Endothelial cell of umbilical vein (primary cell): ENCODE measurements at regions of chr2 and their contacts with region 1.

Region 1: GRCh38 chr2:57497489-57498096 is 549.0 kb upstream of the VRK2 start:
- DNase-seq: peak; percentile 61
- H3K4me3 ChIP-seq: no peak overlapping the region
- H3K27ac ChIP-seq: no peak overlapping the region
- H3K4me1 ChIP-seq: no peaks in the 10 kb centered on the region
- H3K27me3 ChIP-seq: no peaks in the 10 kb centered on the region
- CTCF ChIP-seq: peak; percentile 65 to 66
- POLR2A ChIP-seq: no peak

Region 2: GRCh38 chr2:56741601-56742102 is 755.9 kb before region 1 on chr2:
- CTCF ChIA-PET with region 1: no interaction called
- POLR2A ChIA-PET with region 1: no interaction called
- dilution Hi-C with region 1: no loop called
- intact Hi-C with region 1: no loop called
- DNase-seq: peak; percentile 67
- H3K4me3 ChIP-seq: no peak overlapping the region
- H3K27ac ChIP-seq: peak overlapping the region; percentile 12
- H3K4me1 ChIP-seq: no peaks in the 10 kb centered on the region
- H3K27me3 ChIP-seq: no peaks in the 10 kb centered on the region
- CTCF ChIP-seq: no peak
- POLR2A ChIP-seq: no peak

Region 3: DNA sequence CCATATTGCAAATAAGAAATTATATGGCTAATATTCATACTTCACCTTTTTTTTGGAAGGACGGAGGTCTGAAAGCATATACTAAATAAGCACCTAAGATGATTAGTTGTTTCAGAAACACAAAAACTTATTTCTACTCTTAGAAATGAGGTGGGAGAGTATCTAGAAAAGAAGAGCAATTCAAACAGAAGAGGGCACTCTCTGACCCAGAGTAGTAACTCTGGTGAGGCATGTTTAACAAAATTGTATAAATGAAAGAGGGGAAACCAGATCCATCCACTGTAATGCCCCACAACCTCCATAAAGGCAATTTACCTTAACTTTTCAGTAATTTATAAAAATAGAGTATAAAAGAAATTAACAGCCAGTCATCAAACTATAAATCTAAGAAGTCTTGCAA is 120.6 kb before region 1 on chr2:
- CTCF ChIA-PET with region 1: interaction called, 7 read pairs
- POLR2A ChIA-PET with region 1: no interaction called
- dilution Hi-C with region 1: no loop called
- intact Hi-C with region 1: loop called (anchors 1 kb)
- DNase-seq: peak; percentile 4
- H3K4me3 ChIP-seq: no peak overlapping the region
- H3K27ac ChIP-seq: no peak overlapping the region
- H3K4me1 ChIP-seq: peaks cover 17% of the 10 kb centered on the region
- H3K27me3 ChIP-seq: no peaks in the 10 kb centered on the region
- CTCF ChIP-seq: no peak
- POLR2A ChIP-seq: no peak

Region 4: GRCh38 chr2:57509189-57509588 is 11.6 kb after region 1 on chr2:
- CTCF ChIA-PET with region 1: interaction called, 15 read pairs
- POLR2A ChIA-PET with region 1: no interaction called
- dilution Hi-C with region 1: no loop called
- intact Hi-C with region 1: no loop called
- DNase-seq: no peak
- H3K4me3 ChIP-seq: no peak overlapping the region
- H3K27ac ChIP-seq: no peak overlapping the region
- H3K4me1 ChIP-seq: no peaks in the 10 kb centered on the region
- H3K27me3 ChIP-seq: peaks cover 0 to 4% of the 10 kb centered on the region in 2 experiments
- CTCF ChIP-seq: no peak
- POLR2A ChIP-seq: no peak

Region 5: GRCh38 chr2:57543211-57543610 is 45.6 kb after region 1 on chr2:
- CTCF ChIA-PET with region 1: interaction called, 3 read pairs
- POLR2A ChIA-PET with region 1: no interaction called
- dilution Hi-C with region 1: no loop called
- intact Hi-C with region 1: loop called (anchors 1 kb)
- DNase-seq: no peak
- H3K4me3 ChIP-seq: no peak overlapping the region
- H3K27ac ChIP-seq: no peak overlapping the region
- H3K4me1 ChIP-seq: no peaks in the 10 kb centered on the region
- H3K27me3 ChIP-seq: no peaks in the 10 kb centered on the region
- CTCF ChIP-seq: no peak
- POLR2A ChIP-seq: no peak